BJ (cell line): ENCODE measurements at regions of chr22 and their contacts with region 1.

Region 1: DNA sequence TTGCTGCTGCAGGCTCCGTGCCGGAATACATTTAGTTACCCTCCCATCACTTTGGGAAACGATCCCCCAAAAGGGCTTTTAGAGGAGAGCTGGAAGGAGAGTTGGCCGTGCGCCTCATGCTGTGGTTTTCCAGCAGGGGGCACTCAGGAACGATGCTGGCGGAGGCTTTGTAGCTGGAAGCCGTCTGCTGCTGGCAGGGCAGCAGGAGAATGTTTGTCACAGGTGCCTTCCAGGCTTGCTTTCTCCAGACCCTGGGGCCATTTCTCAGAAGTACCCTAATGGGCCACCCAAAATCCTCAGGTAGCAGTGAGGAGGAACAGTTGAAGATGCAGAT is 30.0 kb upstream of the CABP7 start:
- DNase-seq: no peak
- H3K4me3 ChIP-seq: no peak overlapping the region
- H3K27me3 ChIP-seq: no peaks in the 10 kb centered on the region
- CTCF ChIP-seq: peak; percentile 84

Region 2: GRCh38 chr22:29578462-29579200 is 111.2 kb before region 1 on chr22:
- CTCF ChIA-PET with region 1: no interaction called
- POLR2A ChIA-PET with region 1: no interaction called
- DNase-seq: no peak
- H3K4me3 ChIP-seq: no peak overlapping the region
- H3K27me3 ChIP-seq: no peaks in the 10 kb centered on the region
- CTCF ChIP-seq: no peak

Region 3: GRCh38 chr22:29635734-29636357 is 54.0 kb before region 1 on chr22:
- CTCF ChIA-PET with region 1: interaction called, 10 read pairs
- POLR2A ChIA-PET with region 1: no interaction called
- DNase-seq: no peak
- H3K4me3 ChIP-seq: no peak overlapping the region
- H3K27me3 ChIP-seq: no peaks in the 10 kb centered on the region
- CTCF ChIP-seq: peak; percentile 75

Region 4: DNA sequence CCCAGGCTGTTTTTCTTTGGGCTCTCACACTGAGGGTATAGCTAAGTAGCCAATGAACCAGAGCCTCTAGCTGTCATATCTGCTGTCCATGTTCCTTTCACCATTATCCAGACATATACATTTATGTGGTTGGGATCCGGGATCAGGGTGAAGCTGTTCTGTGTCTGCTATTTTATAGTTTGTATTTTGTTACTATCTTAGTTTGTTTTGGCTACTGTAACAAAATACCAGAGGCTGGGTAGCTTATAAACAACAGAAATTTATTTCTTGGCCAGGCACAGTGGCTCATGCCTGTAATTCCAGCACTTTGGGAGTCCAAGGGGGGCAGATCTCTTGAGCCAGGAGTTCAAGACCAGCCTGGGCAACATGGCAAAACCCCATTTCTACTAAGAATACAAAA is 10.5 kb before region 1 on chr22:
- CTCF ChIA-PET with region 1: interaction called, 10 read pairs
- POLR2A ChIA-PET with region 1: interaction called, 4 read pairs
- DNase-seq: no peak
- H3K4me3 ChIP-seq: no peak overlapping the region
- H3K27me3 ChIP-seq: no peaks in the 10 kb centered on the region
- CTCF ChIP-seq: no peak

Region 5: DNA sequence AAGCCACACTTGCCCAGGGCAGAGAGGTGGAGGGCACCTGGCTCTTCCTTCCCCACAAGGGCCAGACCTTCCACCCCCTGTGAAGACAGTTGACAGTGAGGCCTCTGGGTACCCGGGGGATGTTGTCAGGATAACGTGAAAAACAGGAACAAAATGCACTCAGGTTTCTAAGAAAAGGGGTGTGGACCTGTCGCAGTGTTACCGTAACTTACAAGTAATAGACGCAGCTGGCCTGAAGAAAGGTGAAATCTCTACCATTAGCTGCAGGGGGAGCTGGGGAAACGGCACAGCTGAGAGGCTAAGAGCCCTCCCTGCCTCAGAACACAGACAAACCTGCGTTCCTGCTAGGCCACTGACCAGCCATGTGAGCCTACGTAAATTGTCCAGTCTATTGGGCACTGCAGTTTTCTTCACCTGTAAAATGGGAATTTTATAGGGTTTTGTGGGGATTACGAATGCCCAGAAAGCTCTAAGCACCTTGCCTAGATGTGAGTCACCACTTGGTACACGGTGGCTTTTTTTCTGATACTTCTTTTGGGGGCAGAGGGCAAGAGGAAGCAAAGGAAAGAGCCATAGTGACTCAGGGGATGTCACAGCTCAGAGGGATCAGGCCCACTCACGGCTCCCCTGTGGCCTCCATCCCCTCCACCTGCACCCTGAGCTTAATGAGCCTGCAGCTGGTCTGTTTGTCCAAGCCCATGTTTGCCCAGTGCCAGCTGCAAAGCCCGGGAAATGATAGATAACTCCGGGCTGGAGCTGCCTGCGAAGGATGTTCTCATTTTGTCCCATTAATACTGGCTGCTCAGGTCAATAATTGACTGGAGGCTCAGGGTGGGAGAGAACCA is 11.5 kb after region 1 on chr22:
- CTCF ChIA-PET with region 1: interaction called, 16 read pairs
- POLR2A ChIA-PET with region 1: no interaction called
- DNase-seq: no peak
- H3K4me3 ChIP-seq: no peak overlapping the region
- H3K27me3 ChIP-seq: no peaks in the 10 kb centered on the region
- CTCF ChIP-seq: peak; percentile 25; the same call in 1 of the 2 replicates